CD8-positive, alpha-beta T cell (primary cell): ENCODE measurements at regions of chr3 and their contacts with region 1.

Region 1: DNA sequence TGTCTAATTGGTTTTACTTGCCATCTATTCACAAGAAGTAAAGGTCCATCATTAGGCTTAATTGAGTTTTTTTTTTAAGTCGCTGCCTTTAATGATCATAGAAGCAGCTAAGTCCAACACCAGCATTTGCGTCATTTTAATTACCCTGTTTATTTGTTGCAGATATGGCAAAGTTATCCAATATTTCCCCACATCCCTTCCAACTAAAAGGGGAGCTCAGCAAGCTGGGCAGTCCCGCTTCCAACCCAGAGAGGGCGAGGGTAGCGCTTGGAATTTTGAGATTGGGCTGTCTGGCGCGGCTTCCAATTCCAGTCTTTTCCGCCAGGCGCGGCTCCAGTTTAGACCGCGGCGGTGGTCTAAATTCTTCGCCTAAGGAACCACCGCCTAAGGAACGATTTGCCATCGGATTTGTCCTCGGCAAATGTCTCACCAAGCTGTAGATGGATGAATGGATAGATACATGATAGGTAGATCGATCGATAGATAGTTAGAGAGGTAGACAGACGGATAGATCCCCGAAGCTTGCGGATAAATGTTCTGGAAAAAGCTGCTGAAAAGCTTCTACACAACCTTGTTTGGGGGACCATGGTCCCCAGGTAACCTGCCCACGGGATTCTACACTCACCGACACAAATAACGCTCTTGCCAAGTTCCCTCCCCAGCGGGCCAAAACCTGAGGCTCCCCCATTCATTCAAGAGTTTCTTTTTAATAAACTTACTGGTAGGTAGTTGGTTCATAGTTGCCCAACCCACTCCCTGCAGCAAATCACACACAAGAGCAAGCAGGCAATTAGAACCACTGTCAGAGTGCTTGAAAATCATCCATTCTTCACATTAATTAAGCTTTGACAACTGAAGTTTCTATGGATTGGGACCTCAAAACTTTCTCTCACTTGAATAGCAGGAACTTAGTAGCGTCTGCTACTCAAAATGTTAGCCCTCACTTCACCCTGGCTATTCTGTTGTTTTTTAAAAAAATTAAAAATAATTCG is 49.1 kb downstream of the ZIC4 start:
- DNase-seq: no peak
- ATAC-seq: no peak
- H3K4me3 ChIP-seq: no peak overlapping the region
- H3K4me3 Mint-ChIP-seq: no peak overlapping the region
- H3K27ac ChIP-seq: no peak overlapping the region
- H3K27ac Mint-ChIP-seq: no peak overlapping the region
- H3K4me1 ChIP-seq: no peaks in the 10 kb centered on the region
- H3K4me1 Mint-ChIP-seq: no peaks in the 10 kb centered on the region
- H3K27me3 ChIP-seq: peaks cover 8 to 22% of the 10 kb centered on the region in 2 experiments
- H3K27me3 Mint-ChIP-seq: peaks cover 71% of the 10 kb centered on the region
- CTCF ChIP-seq: no peak

Region 2: DNA sequence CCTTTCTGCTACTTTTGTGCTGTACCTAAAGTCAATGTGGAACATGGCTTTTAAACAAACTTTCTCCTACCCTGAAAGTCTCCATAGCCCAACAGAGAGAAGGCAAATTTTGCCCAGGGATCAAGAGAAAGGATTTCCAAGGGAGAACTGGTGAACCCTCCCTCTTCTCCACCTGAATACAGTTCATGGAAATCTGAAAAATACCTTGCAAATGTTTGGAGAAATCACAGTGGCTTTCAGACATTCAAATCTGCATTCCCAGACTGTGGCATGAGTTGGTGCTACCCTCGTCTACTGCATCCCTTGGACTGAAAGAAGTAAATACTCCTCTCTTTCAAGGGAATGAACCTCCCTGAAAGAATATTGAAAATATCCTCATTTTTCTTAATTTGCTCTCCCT is 10.5 kb after region 1 on chr3:
- CTCF ChIA-PET with region 1: no interaction called
- POLR2A ChIA-PET with region 1: no interaction called
- intact Hi-C with region 1: loop called in 1 of 2 experiments (anchors 1 kb)
- DNase-seq: no peak
- ATAC-seq: no peak
- H3K4me3 ChIP-seq: no peak overlapping the region
- H3K4me3 Mint-ChIP-seq: no peak overlapping the region
- H3K27ac ChIP-seq: no peak overlapping the region
- H3K27ac Mint-ChIP-seq: no peak overlapping the region
- H3K4me1 ChIP-seq: no peaks in the 10 kb centered on the region
- H3K4me1 Mint-ChIP-seq: no peaks in the 10 kb centered on the region
- H3K27me3 ChIP-seq: peaks cover 7% of the 10 kb centered on the region in 2 experiments
- H3K27me3 Mint-ChIP-seq: peaks cover 58% of the 10 kb centered on the region
- CTCF ChIP-seq: no peak

Region 3: GRCh38 chr3:148500881-148501280 is 1143.7 kb after region 1 on chr3:
- CTCF ChIA-PET with region 1: no interaction called
- POLR2A ChIA-PET with region 1: no interaction called
- intact Hi-C with region 1: no loop called
- DNase-seq: no peak
- ATAC-seq: no peak
- H3K4me3 ChIP-seq: no peak overlapping the region
- H3K4me3 Mint-ChIP-seq: no peak overlapping the region
- H3K27ac ChIP-seq: no peak overlapping the region
- H3K27ac Mint-ChIP-seq: no peak overlapping the region
- H3K4me1 ChIP-seq: no peaks in the 10 kb centered on the region
- H3K4me1 Mint-ChIP-seq: no peaks in the 10 kb centered on the region
- H3K27me3 ChIP-seq: no peaks in the 10 kb centered on the region
- H3K27me3 Mint-ChIP-seq: no peaks in the 10 kb centered on the region
- CTCF ChIP-seq: no peak